Gastrocnemius medialis (tissue), 4 donors: ENCODE measurements at regions of chr20 and their contacts with region 1.

Region 1: DNA sequence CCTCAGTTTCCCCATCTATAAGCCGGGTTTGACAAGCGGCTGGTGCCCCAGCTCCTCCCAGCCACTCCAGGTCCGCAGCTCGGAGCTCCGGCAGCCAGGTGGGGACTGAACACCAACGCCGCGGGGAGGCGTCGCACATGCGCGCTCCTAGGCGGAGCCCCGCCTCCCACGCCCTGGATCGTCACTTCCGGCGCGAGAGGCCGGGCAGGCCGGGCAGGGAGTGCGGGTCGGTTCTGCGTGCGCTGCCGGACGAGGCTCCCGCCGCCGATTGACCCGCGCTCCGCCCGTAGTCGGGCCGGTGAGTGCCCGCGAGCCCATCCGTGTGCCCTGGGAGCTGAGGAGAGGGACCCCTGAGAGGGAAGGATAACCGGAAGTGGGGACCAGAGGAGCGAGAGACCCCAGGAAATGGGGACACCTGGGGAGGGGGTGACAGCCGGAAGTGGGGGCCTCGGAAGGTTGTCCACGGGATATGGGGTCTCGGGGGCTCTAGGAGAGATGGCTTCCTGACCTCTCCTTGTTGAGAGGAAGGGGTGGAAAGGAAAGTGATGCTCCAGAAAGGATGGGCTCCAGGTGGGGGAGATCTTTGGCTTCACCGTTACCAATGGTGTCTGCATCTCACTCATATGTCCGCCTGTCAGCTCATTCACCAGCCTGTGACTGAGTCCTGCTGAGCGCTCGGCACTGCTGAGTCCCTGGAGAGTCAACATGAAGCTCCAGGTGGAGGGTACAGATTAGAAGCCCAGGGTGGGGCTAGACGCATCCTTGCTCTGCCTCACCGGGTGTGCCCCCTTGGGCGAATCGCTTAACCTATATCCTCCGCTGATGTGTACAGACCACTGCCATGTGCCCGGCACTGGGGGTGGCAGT is at the start of gene TTPAL:
- DNase-seq: peak; percentile 77 to 88
- ATAC-seq: peak; percentile 85 to 87
- H3K4me3 ChIP-seq: peak within 1 kb of the TSS; percentile 66 to 97 (median 78)
- H3K27ac ChIP-seq: peak within 1 kb of the TSS; percentile 88 to 99 (median 92)
- H3K4me1 ChIP-seq: peaks cover 12 to 15% of the 10 kb centered on the region in 2 donors
- H3K27me3 ChIP-seq: no peaks in the 10 kb centered on the region
- CTCF ChIP-seq: peak; percentile 31 to 63 (median 52)
- POLR2A ChIP-seq: peak; percentile 96 to 98
- total RNA-seq, gene TTPAL: 3.5 to 5.0 (median 4.7) TPM

Region 2: DNA sequence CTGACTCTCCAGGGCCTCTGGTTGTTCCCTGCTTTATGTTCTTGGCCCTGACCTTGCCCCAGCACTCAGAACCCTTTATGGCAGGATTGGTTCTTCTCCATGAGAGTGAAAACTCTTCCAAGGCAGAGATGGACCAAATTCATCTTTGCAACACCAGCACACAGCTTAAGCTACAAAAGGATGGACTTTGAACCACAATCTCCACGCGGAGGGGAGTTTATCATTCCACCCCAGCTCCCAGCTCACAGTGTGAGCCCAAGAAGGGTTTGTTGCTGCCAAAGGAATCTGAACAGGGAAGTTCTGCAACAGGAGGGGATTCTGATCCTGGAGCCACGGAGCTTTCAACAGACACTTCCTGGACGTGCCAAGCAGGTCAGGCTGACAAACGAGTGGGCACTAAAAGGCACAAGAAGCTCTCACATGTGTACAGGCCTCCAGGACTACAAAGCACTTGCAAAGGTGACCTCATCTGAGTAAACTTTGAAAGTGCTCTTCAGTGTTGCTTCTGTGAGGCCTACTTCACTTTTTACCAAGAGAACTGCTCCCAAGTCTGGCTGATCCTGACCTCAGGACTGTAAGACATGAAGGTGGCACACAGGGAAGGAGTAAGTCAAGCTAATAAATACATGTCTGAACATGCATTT is 173.8 kb before region 1 on chr20:
- in situ Hi-C with region 1: no loop called
- intact Hi-C with region 1: no loop called
- DNase-seq: no peak
- ATAC-seq: no peak
- H3K4me3 ChIP-seq: no peak overlapping the region
- H3K27ac ChIP-seq: no peak overlapping the region
- H3K4me1 ChIP-seq: no peaks in the 10 kb centered on the region
- H3K27me3 ChIP-seq: no peaks in the 10 kb centered on the region
- CTCF ChIP-seq: no peak
- POLR2A ChIP-seq: no peak

Region 3: GRCh38 chr20:44651684-44652423 is 175.9 kb after region 1 on chr20 and contains the start of gene ADA:
- in situ Hi-C with region 1: no loop called
- intact Hi-C with region 1: loop called (anchors 1 kb)
- DNase-seq: peak in 1 of 2 donors; percentile 47
- ATAC-seq: peak; percentile 76 to 82
- H3K4me3 ChIP-seq: peak within 1 kb of the TSS; percentile 67 to 92 (median 68)
- H3K27ac ChIP-seq: peak within 1 kb of the TSS; percentile 62 to 88 (median 78)
- H3K4me1 ChIP-seq: peaks cover 0 to 3% of the 10 kb centered on the region in 2 donors
- H3K27me3 ChIP-seq: peaks cover 0 to 4% (median 0%) of the 10 kb centered on the region in 3 donors
- CTCF ChIP-seq: no peak
- POLR2A ChIP-seq: peak; percentile 42 to 57
- total RNA-seq, gene ADA: 2.2 to 5.1 (median 3.0) TPM